T-cell (primary cell): ENCODE measurements at regions of chr14 and their contacts with region 1.

Region 1: GRCh38 chr14:100067971-100068959 is 3.0 kb downstream of the EVL start:
- DNase-seq: peak; percentile 62 to 95 (median 86)
- ATAC-seq: peak; percentile 58 to 66 (median 60)
- H3K4me3 ChIP-seq: peak overlapping the region; percentile 89 to 98
- H3K4me3 Mint-ChIP-seq: peak overlapping the region; percentile 87 to 96 (median 90)
- H3K27ac ChIP-seq: peak overlapping the region; percentile 90
- H3K27ac Mint-ChIP-seq: peak overlapping the region; percentile 98 to 100
- H3K4me1 ChIP-seq: peaks cover 54 to 71% of the 10 kb centered on the region in 2 experiments
- H3K4me1 Mint-ChIP-seq: peaks cover 69 to 75% (median 74%) of the 10 kb centered on the region in 3 donors
- H3K27me3 ChIP-seq: no peaks in the 10 kb centered on the region
- H3K27me3 Mint-ChIP-seq: no peaks in the 10 kb centered on the region

Region 2: DNA sequence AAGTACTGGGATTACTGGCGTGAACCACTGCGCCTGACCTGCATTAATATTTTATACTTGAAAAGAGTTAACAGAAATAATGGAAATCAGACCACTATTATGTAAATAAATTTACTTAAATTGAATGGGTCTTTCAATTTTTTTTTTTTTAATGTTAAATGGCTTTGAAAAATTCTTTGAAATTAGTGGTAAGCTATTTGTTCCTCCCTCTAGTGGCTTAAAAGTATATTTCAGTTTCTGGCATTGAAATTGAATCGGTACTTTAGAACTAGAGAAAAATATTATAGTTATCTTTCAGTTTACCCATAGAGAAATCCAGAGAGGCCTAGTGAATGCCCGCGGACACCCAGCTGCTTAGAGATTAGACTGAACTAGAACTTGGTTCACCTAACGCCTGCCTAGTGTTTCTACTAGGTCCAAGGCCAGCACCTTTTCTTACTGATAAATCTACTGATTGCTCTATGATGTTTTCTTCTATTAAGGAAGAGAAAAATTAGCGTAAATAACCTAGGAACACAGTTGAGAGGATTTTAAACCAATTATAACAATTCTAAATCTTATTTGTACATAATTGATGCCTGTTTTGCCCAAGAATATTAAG is 168.6 kb before region 1 on chr14:
- CTCF ChIA-PET with region 1: no interaction called
- POLR2A ChIA-PET with region 1: no interaction called
- DNase-seq: peak in 1 of 35 experiments; percentile 29
- ATAC-seq: no peak
- H3K4me3 ChIP-seq: no peak overlapping the region
- H3K4me3 Mint-ChIP-seq: no peak overlapping the region
- H3K27ac ChIP-seq: no peak overlapping the region
- H3K27ac Mint-ChIP-seq: no peak overlapping the region
- H3K4me1 ChIP-seq: no peaks in the 10 kb centered on the region
- H3K4me1 Mint-ChIP-seq: no peaks in the 10 kb centered on the region
- H3K27me3 ChIP-seq: peaks cover 5 to 6% of the 10 kb centered on the region in 2 experiments
- H3K27me3 Mint-ChIP-seq: peaks cover 9 to 10% of the 10 kb centered on the region in 2 donors

Region 3: DNA sequence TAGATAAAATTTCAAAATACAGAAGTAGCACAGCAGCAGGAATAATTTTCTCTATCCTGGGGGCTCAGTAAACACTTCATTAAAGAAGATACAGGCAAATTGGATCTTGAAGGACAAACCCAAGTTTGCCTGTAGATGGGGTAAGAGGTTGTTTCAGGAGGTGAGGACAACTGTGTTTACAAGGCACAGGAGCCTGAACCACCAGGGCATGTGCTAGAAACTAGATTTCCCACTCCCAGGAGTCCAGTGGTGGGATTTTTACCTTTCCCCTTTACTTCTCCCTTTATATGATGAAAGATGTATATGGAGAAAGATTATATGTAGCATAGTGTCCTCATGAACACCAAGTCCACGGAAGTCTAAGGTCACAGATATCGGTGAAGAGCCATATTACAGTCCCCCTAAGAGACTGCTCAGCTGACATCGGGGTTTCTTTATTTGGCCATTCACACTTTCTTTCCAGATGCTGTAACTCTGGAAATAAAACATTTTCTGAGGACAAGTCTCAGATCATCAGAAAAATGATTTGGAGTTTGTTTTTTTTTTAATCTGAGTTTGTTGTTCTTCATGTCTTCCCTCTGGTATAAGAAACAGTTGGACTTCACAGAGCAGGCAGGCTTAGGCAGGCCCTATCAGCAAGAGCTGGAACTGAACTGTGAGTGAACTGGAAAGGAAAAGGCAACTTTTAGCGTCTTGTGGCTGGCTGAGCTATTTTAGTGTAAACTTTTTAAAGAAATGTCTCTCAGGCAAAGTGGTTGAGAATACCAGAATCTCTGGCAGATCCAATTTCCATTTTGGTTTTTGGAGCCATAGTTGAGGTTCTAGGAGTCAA is 11.1 kb before region 1 on chr14:
- CTCF ChIA-PET with region 1: interaction called, 10 to 29 read pairs
- POLR2A ChIA-PET with region 1: interaction called, 4 to 9 read pairs
- DNase-seq: peak in 6 of 35 experiments; percentile 28 to 80 (median 42)
- ATAC-seq: peak; percentile 75 to 83 (median 80)
- H3K4me3 ChIP-seq: no peak overlapping the region
- H3K4me3 Mint-ChIP-seq: peak overlapping the region in 2 of 3 donors; percentile 41 to 49
- H3K27ac ChIP-seq: no peak overlapping the region
- H3K27ac Mint-ChIP-seq: peak overlapping the region; percentile 90 to 93
- H3K4me1 ChIP-seq: peaks cover 37 to 52% of the 10 kb centered on the region in 2 experiments
- H3K4me1 Mint-ChIP-seq: peaks cover 54 to 67% (median 56%) of the 10 kb centered on the region in 3 donors
- H3K27me3 ChIP-seq: no peaks in the 10 kb centered on the region
- H3K27me3 Mint-ChIP-seq: no peaks in the 10 kb centered on the region

Region 4: DNA sequence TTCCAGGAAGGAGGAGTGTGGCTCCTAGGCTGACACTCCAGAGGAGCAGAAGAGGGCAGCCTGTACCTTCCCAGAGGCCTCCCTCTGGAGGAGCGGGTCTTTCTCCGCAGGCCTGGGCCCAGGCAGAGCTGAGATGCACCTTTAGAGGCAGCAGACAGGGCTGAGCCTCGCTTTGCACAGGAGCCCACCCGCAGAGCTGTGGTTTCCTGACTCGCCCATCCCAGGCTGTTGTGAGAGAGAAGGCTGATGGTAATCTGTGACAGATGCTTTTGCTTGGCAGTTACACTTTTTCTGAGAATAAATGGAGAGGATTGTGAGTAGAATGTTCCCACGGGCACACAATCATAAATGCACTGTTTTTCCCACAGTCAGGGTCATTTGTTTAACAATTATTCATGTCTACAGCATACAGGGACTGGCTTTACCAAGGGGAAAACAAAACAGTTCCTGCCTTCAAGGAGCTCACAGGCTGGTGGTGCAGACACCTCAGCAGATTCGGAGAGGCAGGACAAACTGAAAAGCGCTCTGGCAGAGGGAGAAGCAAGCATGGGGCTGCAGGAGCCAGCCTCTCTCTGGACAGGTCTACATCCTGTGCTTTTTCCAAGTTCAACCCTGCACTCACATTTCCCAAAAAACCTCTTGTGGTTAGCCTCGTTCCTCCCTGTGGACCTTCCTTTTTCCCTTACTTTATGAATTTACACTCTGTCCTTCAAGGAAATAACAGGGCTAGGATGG is 10.9 kb after region 1 on chr14:
- CTCF ChIA-PET with region 1: interaction called, 7 to 143 read pairs
- POLR2A ChIA-PET with region 1: interaction called, 7 to 55 read pairs
- DNase-seq: peak; percentile 67 to 92 (median 85)
- ATAC-seq: peak; percentile 82 to 88 (median 84)
- H3K4me3 ChIP-seq: peak overlapping the region; percentile 31 to 58
- H3K4me3 Mint-ChIP-seq: peak overlapping the region; percentile 69 to 87 (median 69)
- H3K27ac ChIP-seq: peak overlapping the region; percentile 60
- H3K27ac Mint-ChIP-seq: peak overlapping the region; percentile 98
- H3K4me1 ChIP-seq: peaks cover 89 to 96% of the 10 kb centered on the region in 2 experiments
- H3K4me1 Mint-ChIP-seq: peaks cover 99 to 100% (median 99%) of the 10 kb centered on the region in 3 donors
- H3K27me3 ChIP-seq: no peaks in the 10 kb centered on the region
- H3K27me3 Mint-ChIP-seq: no peaks in the 10 kb centered on the region

Region 5: DNA sequence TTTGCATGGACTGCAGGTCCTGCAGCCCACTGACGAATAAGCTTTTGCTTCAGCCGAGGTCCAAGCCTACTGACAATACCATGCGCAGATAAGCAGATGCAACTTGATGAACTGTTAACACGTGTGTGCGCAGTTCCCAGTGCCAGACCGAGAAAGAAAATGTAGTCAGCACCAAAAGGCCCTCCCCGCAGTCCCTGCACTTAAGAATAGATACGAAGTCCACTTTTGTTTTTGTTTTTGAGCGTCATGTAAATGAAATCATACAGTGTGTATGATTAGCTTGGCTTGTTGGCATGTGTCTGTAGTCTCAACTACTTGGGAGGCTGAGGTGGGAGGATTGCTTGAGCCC is 32.1 kb after region 1 on chr14:
- CTCF ChIA-PET with region 1: interaction called, 10 to 174 read pairs
- POLR2A ChIA-PET with region 1: interaction called, 9 to 16 read pairs
- DNase-seq: no peak
- ATAC-seq: no peak
- H3K4me3 ChIP-seq: peak overlapping the region in 1 of 2 donors; percentile 18
- H3K4me3 Mint-ChIP-seq: peak overlapping the region; percentile 54 to 81 (median 56)
- H3K27ac ChIP-seq: peak overlapping the region; percentile 35
- H3K27ac Mint-ChIP-seq: peak overlapping the region; percentile 91 to 94
- H3K4me1 ChIP-seq: peaks cover 75 to 97% of the 10 kb centered on the region in 2 experiments
- H3K4me1 Mint-ChIP-seq: peaks cover 97 to 100% (median 98%) of the 10 kb centered on the region in 3 donors
- H3K27me3 ChIP-seq: no peaks in the 10 kb centered on the region
- H3K27me3 Mint-ChIP-seq: no peaks in the 10 kb centered on the region

Region 6: GRCh38 chr14:100108042-100108825 is 40.0 kb after region 1 on chr14:
- CTCF ChIA-PET with region 1: interaction called, 13 to 174 read pairs
- POLR2A ChIA-PET with region 1: interaction called, 6 to 10 read pairs
- DNase-seq: peak; percentile 67 to 92 (median 85)
- ATAC-seq: peak; percentile 64 to 68 (median 66)
- H3K4me3 ChIP-seq: no peak overlapping the region
- H3K4me3 Mint-ChIP-seq: peak overlapping the region in 1 of 3 donors; percentile 81
- H3K27ac ChIP-seq: peak overlapping the region; percentile 81
- H3K27ac Mint-ChIP-seq: peak overlapping the region; percentile 94 to 96
- H3K4me1 ChIP-seq: peaks cover 45 to 85% of the 10 kb centered on the region in 2 experiments
- H3K4me1 Mint-ChIP-seq: peaks cover 81 to 85% (median 81%) of the 10 kb centered on the region in 3 donors
- H3K27me3 ChIP-seq: no peaks in the 10 kb centered on the region
- H3K27me3 Mint-ChIP-seq: no peaks in the 10 kb centered on the region

Region 7: GRCh38 chr14:100192672-100193416 is 124.6 kb after region 1 on chr14:
- CTCF ChIA-PET with region 1: interaction called in 1 of 2 experiments, 10 read pairs
- POLR2A ChIA-PET with region 1: interaction called, 3 to 6 read pairs
- DNase-seq: peak; percentile 98 to 100 (median 99)
- ATAC-seq: peak; percentile 98 to 99 (median 99)
- H3K4me3 ChIP-seq: peak overlapping the region; percentile 39 to 59
- H3K4me3 Mint-ChIP-seq: peak overlapping the region; percentile 55 to 69 (median 56)
- H3K27ac ChIP-seq: peak overlapping the region; percentile 88
- H3K27ac Mint-ChIP-seq: peak overlapping the region; percentile 94 to 96
- H3K4me1 ChIP-seq: peaks cover 0 to 14% of the 10 kb centered on the region in 2 experiments
- H3K4me1 Mint-ChIP-seq: peaks cover 9 to 11% (median 11%) of the 10 kb centered on the region in 3 donors
- H3K27me3 ChIP-seq: no peaks in the 10 kb centered on the region
- H3K27me3 Mint-ChIP-seq: no peaks in the 10 kb centered on the region